Caco-2 (cell line): ENCODE measurements at regions of chr16 and their contacts with region 1.

Region 1: DNA sequence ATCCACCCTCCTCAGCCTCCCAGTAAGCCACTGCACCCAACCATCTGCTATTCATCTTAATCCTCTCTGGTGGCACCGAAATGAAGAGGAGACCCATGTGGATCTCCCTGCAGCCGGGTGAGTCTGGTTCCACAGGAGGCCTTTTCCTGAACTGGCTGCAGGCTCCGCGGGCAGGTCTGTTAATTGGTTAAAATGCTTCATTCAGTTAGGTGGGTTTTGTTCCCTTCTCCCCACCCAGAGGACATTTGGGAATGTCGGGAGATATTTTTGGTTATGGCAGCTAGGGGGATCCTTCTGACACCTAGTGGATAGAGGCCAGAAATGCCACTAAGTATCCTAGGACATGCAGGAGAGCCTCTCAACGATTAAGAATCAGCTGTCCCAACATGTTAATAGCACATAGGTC is 16.7 kb downstream of the C16orf54 start:
- DNase-seq: peak; percentile 43 to 49
- H3K4me3 ChIP-seq: no peak overlapping the region
- H3K4me3 Mint-ChIP-seq: peak overlapping the region; percentile 52
- H3K27ac Mint-ChIP-seq: no peak overlapping the region
- H3K4me1 ChIP-seq: peaks cover 4% of the 10 kb centered on the region; the same call in 1 of the 2 replicates
- H3K4me1 Mint-ChIP-seq: peaks cover 8% of the 10 kb centered on the region
- H3K27me3 ChIP-seq: no peaks in the 10 kb centered on the region
- H3K27me3 Mint-ChIP-seq: no peaks in the 10 kb centered on the region
- CTCF ChIP-seq: peak; percentile 66 to 72

Region 2: DNA sequence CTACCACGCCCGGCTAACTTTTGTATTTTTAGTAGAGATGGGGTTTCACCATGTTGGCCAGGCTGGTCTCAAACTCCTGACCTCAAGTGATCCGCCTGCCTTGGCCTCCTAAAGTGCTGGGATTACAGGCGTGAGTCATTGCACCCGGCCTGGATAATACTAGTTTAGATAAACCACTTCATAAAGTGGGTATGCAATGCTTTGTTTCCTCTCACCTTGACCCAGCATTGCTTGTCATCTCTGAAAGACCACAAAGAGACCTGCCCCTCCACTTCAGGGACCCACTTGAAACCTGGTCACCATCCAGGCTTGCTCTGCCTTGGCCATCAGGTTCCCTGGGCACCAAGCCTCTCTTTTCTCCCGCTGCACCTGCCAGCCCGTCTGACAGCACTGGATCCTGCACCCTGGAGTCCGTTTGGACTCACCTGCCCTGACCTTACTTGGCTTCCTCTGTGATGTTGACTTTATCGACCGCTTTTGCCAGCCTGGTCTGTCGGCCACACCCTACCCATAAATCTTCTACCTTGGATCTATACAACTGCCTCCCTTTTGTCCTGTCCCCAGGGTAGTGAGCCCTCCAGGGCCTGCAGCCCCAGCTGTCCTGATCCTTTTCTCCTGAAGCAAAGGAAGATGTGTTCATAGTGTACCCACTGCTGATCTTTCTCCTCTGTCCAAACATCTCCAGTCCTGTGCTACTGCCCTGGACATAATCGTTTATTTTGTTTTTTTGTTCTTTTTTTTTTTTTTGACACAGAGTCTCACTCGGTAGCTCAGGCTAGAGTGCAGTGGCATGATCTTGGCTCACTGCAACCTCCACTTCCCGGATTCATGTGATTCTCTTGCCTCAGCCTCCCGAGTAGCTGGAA is 36.3 kb after region 1 on chr16:
- CTCF ChIA-PET with region 1: no interaction called
- POLR2A ChIA-PET with region 1: no interaction called
- intact Hi-C with region 1: no loop called
- DNase-seq: peak; percentile 42 to 63
- H3K4me3 ChIP-seq: no peak overlapping the region
- H3K4me3 Mint-ChIP-seq: peak overlapping the region; percentile 9
- H3K27ac Mint-ChIP-seq: peak overlapping the region; percentile 70
- H3K4me1 ChIP-seq: peaks cover 15% of the 10 kb centered on the region
- H3K4me1 Mint-ChIP-seq: peaks cover 27% of the 10 kb centered on the region
- H3K27me3 ChIP-seq: no peaks in the 10 kb centered on the region
- H3K27me3 Mint-ChIP-seq: no peaks in the 10 kb centered on the region
- CTCF ChIP-seq: no peak

Region 3: DNA sequence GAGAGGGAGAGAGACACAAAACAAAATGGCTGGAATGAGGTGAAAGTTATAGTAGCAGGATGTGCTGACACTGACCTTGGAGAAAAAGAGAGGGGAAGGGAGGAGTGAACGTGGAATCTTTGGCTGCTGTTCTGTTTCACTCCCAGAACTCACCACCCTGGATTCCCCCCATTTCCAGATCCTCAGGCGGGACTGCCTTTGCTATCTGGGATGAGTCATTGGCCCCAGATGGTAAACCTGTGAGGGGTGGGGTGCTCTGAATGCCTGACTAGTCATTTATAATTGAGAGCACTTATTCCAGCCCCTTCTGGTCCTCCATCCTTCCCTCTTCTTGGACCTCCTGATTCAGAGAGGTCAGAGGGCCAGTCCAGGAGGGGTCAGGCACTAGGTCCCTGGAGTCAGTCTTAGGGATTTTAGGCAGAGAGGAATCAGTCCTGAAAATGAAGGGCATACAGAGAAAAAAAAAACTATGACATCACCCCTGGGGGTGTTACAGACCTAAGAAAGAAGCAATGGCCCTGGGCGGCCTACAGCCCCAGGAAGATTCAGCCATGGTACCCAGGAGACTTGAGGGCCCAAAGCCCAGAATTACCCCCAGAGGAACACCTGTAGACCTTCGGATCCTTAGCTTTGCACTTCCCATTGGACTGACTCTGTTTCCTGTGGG is 46.8 kb after region 1 on chr16:
- CTCF ChIA-PET with region 1: interaction called, 3 read pairs
- POLR2A ChIA-PET with region 1: no interaction called
- intact Hi-C with region 1: loop called (anchors 5 kb)
- DNase-seq: no peak
- H3K4me3 ChIP-seq: no peak overlapping the region
- H3K4me3 Mint-ChIP-seq: no peak overlapping the region
- H3K27ac Mint-ChIP-seq: peak overlapping the region; percentile 49
- H3K4me1 ChIP-seq: peaks cover 45% of the 10 kb centered on the region
- H3K4me1 Mint-ChIP-seq: peaks cover 44% of the 10 kb centered on the region
- H3K27me3 ChIP-seq: no peaks in the 10 kb centered on the region
- H3K27me3 Mint-ChIP-seq: no peaks in the 10 kb centered on the region
- CTCF ChIP-seq: no peak

Region 4: GRCh38 chr16:30010844-30011713 is 282.0 kb after region 1 on chr16 and contains the start of gene DOC2A:
- CTCF ChIA-PET with region 1: no interaction called
- POLR2A ChIA-PET with region 1: no interaction called
- intact Hi-C with region 1: no loop called
- DNase-seq: peak in 1 of 2 experiments; percentile 32
- H3K4me3 ChIP-seq: peak within 1 kb of the TSS; percentile 83
- H3K4me3 Mint-ChIP-seq: peak within 1 kb of the TSS; percentile 68
- H3K27ac Mint-ChIP-seq: no peak within 1 kb of the TSS
- H3K4me1 ChIP-seq: no peaks in the 10 kb centered on the region
- H3K4me1 Mint-ChIP-seq: no peaks in the 10 kb centered on the region
- H3K27me3 ChIP-seq: no peaks in the 10 kb centered on the region
- H3K27me3 Mint-ChIP-seq: no peaks in the 10 kb centered on the region
- CTCF ChIP-seq: no peak
- total RNA-seq, gene DOC2A: 3.5 and 4.5 TPM in 2 replicates